ENCODE measurements at regions of chr20 and their contacts with region 1.

Region 1: DNA sequence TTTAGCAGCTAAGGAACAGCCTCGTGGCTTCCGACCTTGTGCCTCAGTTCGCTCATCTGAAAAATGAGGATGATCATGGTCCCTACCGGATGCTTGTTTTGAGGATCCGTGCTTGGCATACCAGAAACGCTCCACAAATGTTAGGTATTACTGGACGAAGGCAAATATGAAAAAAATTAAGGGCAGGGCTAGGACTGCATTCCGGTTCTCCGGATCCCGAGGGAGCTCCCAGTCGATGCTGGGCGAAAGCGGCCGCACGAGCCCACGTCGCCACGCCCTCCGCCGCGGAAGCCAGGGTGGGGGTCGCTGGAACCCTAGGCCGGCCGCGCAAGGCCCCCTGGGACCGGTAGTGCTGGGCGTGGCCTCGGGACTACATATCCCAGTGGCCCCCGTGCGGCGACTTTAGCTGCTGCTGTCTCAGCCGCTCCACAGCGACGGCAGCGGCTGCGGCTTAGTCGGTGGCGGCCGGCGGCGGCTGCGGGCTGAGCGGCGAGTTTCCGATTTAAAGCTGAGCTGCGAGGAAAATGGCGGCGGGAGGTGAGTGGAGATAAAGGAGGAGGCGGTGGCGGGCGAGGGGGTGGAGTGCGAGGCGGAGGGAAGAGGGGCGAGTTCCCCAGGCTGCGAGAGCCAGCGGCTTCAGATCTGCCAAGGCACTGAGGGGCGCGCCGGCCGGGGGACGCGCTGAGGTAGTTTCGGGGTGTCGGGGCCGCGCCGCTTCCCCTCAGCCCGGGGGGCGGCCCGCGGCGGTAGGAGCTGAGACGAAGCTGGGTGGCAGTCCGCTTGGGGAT is at the start of gene NCOA3:
- DNase-seq: peak; percentile 97
- ATAC-seq: peak; percentile 97
- H3K4me3 ChIP-seq: peak within 1 kb of the TSS; percentile 100
- H3K27ac ChIP-seq: peak within 1 kb of the TSS; percentile 82
- H3K4me1 ChIP-seq: peaks cover 57% of the 10 kb centered on the region
- H3K27me3 ChIP-seq: no peaks in the 10 kb centered on the region; a peak in 1 of 5 replicates
- CTCF ChIP-seq: peak; percentile 84
- EP300 ChIP-seq: peak; percentile 63 to 64; a peak in 2 of 4 replicates
- POLR2A ChIP-seq: peak; percentile 90 to 96
- RAD21 ChIP-seq: peak; percentile 77
- total RNA-seq, gene NCOA3: 56.8 and 76.2 TPM in 2 replicates

Region 2: DNA sequence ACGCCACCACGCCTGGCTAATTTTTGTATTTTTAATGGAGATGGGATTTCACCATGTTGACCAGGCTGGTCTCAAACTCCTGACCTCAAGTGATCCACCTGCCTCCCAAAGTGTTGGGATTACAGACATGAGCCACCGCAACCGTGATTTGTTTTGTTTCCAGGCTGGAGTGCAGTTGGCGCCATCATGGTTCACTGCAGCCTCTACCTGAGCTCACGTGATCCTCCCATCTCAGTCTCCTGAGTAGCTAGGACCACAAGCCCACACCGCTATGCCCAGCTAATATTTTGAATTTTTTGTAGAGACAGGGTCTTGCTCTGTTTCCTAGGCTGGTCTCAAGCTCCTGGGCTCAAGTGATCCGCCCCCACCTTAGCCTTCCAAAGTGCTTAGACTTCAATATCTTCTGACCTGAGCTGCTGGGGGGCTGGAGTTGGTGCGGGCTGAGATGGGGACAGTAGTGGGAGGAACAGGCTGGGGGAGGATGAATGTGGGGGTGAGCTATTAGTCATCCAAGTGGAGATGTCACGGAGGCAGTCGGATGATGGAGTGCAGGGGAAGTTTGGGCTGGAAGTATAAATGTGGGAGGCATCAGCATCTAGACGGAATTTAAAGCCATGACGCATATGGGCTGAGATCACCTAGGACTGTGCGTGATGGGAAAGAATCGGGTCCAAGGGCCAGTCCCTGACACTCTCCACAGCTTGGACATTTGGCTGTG is 122.1 kb before region 1 on chr20:
- CTCF ChIA-PET with region 1: no interaction called
- POLR2A ChIA-PET with region 1: interaction called, 6 read pairs
- in situ Hi-C with region 1: no loop called
- intact Hi-C with region 1: loop called (anchors 5 kb)
- DNase-seq: no peak
- ATAC-seq: peak; percentile 9; the same call in 2 of the 3 replicates
- H3K4me3 ChIP-seq: no peak overlapping the region
- H3K27ac ChIP-seq: no peak overlapping the region
- H3K4me1 ChIP-seq: peaks cover 45% of the 10 kb centered on the region
- H3K27me3 ChIP-seq: no peaks in the 10 kb centered on the region
- CTCF ChIP-seq: no peak
- EP300 ChIP-seq: no peak
- POLR2A ChIP-seq: no peak
- RAD21 ChIP-seq: no peak

Region 3: DNA sequence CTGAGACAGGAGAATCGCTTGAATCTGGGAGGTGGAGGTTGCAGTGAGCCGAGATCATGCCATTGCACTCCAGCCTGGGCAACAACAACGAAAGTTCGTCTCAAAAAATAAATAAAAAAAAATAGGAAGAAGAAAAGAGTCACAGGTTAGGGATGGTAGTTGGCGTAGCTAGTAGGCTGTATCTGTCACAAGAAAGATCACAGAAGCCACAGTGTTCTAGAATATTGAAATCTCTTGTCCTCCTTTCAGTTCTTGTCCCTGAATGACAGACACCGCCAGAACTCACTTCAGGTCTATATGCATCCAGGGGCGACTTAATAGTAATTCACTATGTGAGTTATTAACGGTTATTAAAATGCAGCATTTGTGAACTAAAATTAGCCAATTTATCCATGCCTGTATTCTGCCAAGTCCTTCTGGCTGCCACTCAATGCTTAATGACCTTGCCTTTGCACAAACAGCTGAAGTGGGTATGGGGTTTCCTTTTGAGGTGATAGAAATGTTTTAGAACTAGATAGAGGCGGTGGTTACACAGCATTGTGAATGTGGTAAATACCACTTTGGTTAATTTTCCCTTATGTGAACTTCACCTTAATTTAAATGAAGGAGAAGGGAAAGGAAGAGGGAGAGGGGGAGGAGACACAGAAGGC is 103.9 kb before region 1 on chr20:
- CTCF ChIA-PET with region 1: no interaction called
- POLR2A ChIA-PET with region 1: interaction called, 12 read pairs
- in situ Hi-C with region 1: no loop called
- intact Hi-C with region 1: no loop called
- DNase-seq: no peak
- ATAC-seq: no peak
- H3K4me3 ChIP-seq: no peak overlapping the region
- H3K27ac ChIP-seq: peak overlapping the region; percentile 41
- H3K4me1 ChIP-seq: peaks cover 34% of the 10 kb centered on the region
- H3K27me3 ChIP-seq: no peaks in the 10 kb centered on the region
- CTCF ChIP-seq: no peak
- EP300 ChIP-seq: no peak
- POLR2A ChIP-seq: no peak
- RAD21 ChIP-seq: no peak

Region 4: DNA sequence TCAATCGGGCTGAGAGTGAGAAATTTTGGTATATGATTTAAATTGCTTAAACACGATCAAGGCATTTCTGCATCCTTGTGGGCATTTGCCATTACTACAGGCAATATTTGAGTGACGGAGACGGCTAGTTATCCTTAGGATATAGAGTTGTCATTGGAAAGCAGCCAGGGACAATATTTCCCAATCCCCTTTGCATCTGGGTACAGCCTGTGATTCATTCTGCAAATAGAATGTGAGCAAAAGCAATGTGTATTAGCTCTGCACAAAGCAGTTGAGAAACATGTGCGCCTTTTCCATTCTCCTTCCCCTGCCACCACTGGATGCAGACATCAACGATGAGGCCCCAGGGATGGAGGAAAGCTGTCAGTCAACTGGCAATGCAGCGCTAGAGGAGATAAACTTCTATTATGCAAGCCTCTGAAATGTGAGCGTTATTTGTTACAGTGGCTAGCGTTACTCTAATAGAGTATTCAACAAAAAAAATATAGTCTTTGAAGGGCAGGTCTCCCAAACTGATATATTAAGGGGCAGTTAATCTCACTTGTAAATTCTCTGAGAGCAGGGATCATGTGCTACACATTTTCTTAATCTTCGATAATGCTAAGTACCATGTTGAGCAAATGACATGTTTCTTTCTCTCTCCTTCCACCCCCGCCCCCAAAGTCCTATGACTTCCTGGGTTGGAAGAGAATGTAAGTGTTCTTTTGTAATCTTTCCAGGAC is 37.1 kb before region 1 on chr20:
- CTCF ChIA-PET with region 1: interaction called, 4 read pairs
- POLR2A ChIA-PET with region 1: interaction called, 17 read pairs
- in situ Hi-C with region 1: no loop called
- intact Hi-C with region 1: loop called (anchors 1 kb)
- DNase-seq: peak; percentile 100
- ATAC-seq: peak; percentile 99
- H3K4me3 ChIP-seq: peak overlapping the region in 1 of 3 experiments; percentile 8; a peak in 2 of 6 replicates
- H3K27ac ChIP-seq: peak overlapping the region; percentile 19
- H3K4me1 ChIP-seq: peaks cover 76% of the 10 kb centered on the region
- H3K27me3 ChIP-seq: no peaks in the 10 kb centered on the region
- CTCF ChIP-seq: peak; percentile 66
- EP300 ChIP-seq: peak; percentile 98
- POLR2A ChIP-seq: peak in 1 of 2 experiments; percentile 48; a peak in 1 of 4 replicates
- RAD21 ChIP-seq: peak; percentile 74

Region 5: DNA sequence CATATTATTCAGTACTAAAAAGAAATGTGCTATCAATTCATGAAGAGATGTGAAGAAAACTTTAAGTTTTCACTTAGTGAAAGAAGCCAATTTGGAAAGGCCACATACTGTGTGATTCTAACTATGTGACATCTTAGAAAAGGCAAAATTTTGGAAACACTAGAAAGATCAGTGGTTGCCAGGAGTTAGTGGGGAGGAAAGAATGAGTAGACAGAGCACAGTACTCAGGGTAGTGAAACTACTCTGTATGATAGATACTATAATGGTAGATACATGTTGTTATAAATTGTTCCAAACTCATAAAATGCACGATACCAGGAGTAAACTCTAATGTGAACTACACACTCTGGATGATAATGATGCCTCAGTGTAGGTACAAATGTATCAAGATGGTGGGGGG is 14.2 kb after region 1 on chr20:
- CTCF ChIA-PET with region 1: no interaction called
- POLR2A ChIA-PET with region 1: interaction called, 39 read pairs
- in situ Hi-C with region 1: no loop called
- intact Hi-C with region 1: no loop called
- DNase-seq: no peak
- ATAC-seq: no peak
- H3K4me3 ChIP-seq: no peak overlapping the region
- H3K27ac ChIP-seq: no peak overlapping the region
- H3K4me1 ChIP-seq: peaks cover 38% of the 10 kb centered on the region
- H3K27me3 ChIP-seq: no peaks in the 10 kb centered on the region
- CTCF ChIP-seq: no peak
- EP300 ChIP-seq: no peak
- POLR2A ChIP-seq: no peak
- RAD21 ChIP-seq: no peak

Region 6: GRCh38 chr20:47586646-47587306 is 85.1 kb after region 1 on chr20:
- CTCF ChIA-PET with region 1: no interaction called
- POLR2A ChIA-PET with region 1: no interaction called
- in situ Hi-C with region 1: no loop called
- intact Hi-C with region 1: no loop called
- DNase-seq: no peak
- ATAC-seq: no peak
- H3K4me3 ChIP-seq: no peak overlapping the region
- H3K27ac ChIP-seq: no peak overlapping the region
- H3K4me1 ChIP-seq: peaks cover 8% of the 10 kb centered on the region; the same call in 1 of the 2 replicates
- H3K27me3 ChIP-seq: no peaks in the 10 kb centered on the region
- CTCF ChIP-seq: no peak
- EP300 ChIP-seq: no peak
- POLR2A ChIP-seq: no peak
- RAD21 ChIP-seq: no peak

Region 7: DNA sequence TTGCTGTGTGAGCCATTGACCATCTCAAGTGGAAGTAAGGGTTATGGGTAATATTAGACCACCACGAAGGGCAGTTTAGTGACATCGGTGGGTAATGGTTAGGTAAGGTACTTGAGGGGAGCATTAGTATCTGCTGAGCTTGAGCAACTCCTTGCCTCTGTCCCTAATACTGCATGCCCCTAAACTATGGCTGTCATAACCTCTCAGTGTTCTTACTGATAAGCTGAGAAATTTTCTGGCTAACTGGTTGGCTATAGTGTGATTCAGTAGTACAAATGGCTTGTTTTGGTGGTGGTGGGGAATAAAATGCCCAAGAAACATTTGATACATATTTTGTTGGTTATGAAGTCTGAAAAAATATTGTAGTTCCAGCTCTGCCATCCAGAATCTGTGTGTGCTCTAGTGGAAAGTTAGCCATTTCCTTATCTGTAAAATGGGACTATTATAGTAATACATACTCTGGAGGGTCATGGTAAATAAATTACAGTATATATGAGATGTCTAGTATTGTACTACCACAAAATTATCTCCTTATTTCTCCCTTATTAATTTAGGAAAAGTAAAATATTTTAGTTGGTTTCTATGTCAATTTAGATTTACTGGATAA is 113.1 kb after region 1 on chr20:
- CTCF ChIA-PET with region 1: no interaction called
- POLR2A ChIA-PET with region 1: interaction called, 10 read pairs
- in situ Hi-C with region 1: no loop called
- intact Hi-C with region 1: no loop called
- DNase-seq: no peak
- ATAC-seq: no peak
- H3K4me3 ChIP-seq: no peak overlapping the region
- H3K27ac ChIP-seq: no peak overlapping the region
- H3K4me1 ChIP-seq: peaks cover 10% of the 10 kb centered on the region; the same call in 1 of the 2 replicates
- H3K27me3 ChIP-seq: no peaks in the 10 kb centered on the region
- CTCF ChIP-seq: no peak
- EP300 ChIP-seq: no peak
- POLR2A ChIP-seq: no peak
- RAD21 ChIP-seq: no peak

Measured in HepG2 (cell line).